ENCODE measurements at regions of chr5 and their contacts with region 1.

Region 1: GRCh38 chr5:139439013-139439903 is at the start of gene DNAJC18:
- DNase-seq: peak; percentile 81 to 93 (median 86)
- ATAC-seq: peak; percentile 93
- H3K4me3 Mint-ChIP-seq: peak within 1 kb of the TSS; percentile 93 to 100 (median 98)
- H3K27ac Mint-ChIP-seq: peak within 1 kb of the TSS; percentile 97 to 100 (median 99)
- H3K4me1 Mint-ChIP-seq: peaks cover 21 to 38% (median 34%) of the 10 kb centered on the region in 4 donors
- H3K27me3 Mint-ChIP-seq: peaks cover 0 to 2% (median 0%) of the 10 kb centered on the region in 5 donors
- polyA plus RNA-seq, gene DNAJC18: 2.8 to 9.1 (median 5.1) TPM

Region 2: DNA sequence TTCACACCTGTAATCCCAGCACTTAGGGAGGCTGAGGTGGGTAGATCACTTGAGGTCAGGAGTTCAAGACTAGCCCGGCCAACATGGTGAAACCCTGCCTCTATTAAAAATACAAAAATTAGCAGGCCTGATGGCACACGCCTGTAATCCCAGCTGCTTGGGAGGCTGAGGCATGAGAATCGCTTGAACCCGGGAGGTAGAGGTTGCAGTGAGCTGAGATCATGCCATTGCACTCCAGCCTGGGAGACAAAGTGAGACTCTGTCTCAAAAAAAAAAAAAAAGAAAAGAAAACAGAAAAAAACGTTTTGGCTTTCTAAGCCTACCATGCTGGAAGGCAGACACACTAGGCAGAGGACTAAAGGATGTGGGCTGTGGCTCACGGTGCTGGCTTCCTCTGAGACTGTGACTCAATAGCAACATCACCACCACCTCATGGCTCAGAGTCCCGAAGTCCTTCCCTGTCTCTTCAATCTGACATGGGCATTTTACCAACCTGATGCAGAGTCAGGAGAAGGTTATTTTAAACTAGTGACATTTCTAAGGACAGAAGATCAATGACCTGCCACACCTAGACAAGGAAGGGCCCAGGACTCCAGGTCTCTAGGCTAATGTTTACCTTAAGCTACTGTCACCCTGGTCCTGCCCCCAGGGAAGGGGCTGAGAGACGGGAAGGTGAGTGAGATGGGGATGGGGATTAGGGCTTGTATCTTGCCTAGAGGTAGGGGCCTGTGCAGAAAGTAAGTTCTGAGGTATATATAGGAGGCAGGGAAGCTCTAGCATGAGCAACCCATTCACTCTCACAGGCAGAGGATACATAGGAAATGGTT is 19.5 kb after region 1 on chr5:
- POLR2A ChIA-PET with region 1: interaction called, 22 read pairs
- DNase-seq: peak; percentile 49 to 90 (median 76)
- ATAC-seq: peak; percentile 98 to 99
- H3K4me3 Mint-ChIP-seq: peak overlapping the region; percentile 16 to 70 (median 64)
- H3K27ac Mint-ChIP-seq: peak overlapping the region; percentile 90 to 97 (median 94)
- H3K4me1 Mint-ChIP-seq: peaks cover 34 to 75% (median 57%) of the 10 kb centered on the region in 4 donors
- H3K27me3 Mint-ChIP-seq: no peaks in the 10 kb centered on the region

Region 3: DNA sequence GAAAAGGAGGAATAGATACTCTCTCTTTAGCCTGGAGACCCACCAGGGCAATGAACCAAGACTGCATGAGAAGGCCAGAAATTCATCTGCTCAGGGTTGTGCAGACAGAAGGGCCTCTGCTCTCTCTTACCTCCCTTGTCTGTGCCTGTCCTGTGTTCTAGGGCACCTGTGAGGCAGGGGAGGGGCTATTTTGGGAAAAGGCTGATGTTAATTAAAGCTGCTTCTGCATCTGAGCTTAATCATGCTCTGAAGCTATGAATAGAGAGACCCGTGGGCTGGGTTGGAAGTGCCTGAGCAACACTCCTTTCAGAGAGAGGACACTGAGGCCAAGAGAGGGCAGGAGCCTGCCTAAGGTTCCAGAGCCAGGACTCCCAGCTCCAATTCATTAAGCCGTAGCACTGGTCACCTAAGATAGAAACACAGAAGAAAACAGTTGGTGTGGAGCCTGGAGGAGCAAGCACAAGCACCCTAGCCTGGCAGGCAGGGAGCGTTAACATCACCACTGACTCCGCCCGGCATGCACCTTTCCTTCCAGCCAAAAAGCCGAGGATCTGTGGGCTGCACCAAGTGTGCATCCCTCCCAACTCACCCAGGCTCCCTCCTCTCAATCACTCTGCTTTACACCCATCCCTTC is 74.7 kb after region 1 on chr5:
- POLR2A ChIA-PET with region 1: interaction called, 11 read pairs
- DNase-seq: no peak
- ATAC-seq: no peak
- H3K4me3 Mint-ChIP-seq: peak overlapping the region in 1 of 10 donors; percentile 52
- H3K27ac Mint-ChIP-seq: peak overlapping the region in 5 of 10 donors; percentile 0 to 81 (median 76)
- H3K4me1 Mint-ChIP-seq: peaks cover 31 to 60% (median 51%) of the 10 kb centered on the region in 4 donors
- H3K27me3 Mint-ChIP-seq: no peaks in the 10 kb centered on the region